ENCODE measurements at regions of chr16 and their contacts with region 1.

Region 1: GRCh38 chr16:25051406-25052150 is 36.4 kb upstream of the ARHGAP17 start:
- DNase-seq: no peak
- H3K4me3 ChIP-seq: no peak overlapping the region
- H3K27ac ChIP-seq: no peak overlapping the region
- H3K4me1 ChIP-seq: peaks cover 3% of the 10 kb centered on the region
- H3K27me3 ChIP-seq: no peaks in the 10 kb centered on the region
- CTCF ChIP-seq: no peak
- EP300 ChIP-seq: no peak
- POLR2A ChIP-seq: no peak

Region 2: DNA sequence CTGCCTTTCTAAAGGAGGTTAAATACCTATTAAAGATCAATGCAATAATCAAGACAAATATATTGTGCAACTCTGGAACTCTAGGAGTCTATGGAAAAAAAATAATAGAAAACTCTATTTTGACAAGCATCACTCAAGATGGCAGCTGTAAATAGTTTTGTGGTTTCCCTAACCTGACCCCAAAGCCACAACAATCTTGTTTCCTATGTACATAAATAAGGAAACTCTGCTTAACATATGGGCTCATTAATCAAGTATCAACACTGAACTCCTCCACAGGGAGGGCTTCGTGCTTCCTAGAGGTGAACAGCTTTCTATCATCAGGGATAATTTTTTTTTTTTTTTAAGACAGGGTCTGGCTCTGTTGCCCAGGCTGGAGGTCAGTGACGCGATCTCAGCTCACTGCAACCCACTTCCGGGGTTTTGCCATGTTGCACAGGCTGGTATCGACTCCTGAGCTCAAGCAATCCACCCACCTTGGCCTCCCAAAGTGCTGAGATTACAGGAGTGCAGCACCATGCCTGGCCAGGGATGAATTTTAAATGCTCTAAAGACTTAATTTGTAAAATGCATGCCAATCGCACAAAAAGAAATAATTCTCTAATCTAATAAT is 78.9 kb before region 1 on chr16:
- intact Hi-C with region 1: no loop called
- DNase-seq: no peak
- H3K4me3 ChIP-seq: no peak overlapping the region
- H3K27ac ChIP-seq: no peak overlapping the region
- H3K4me1 ChIP-seq: peaks cover 8% of the 10 kb centered on the region
- H3K27me3 ChIP-seq: no peaks in the 10 kb centered on the region
- CTCF ChIP-seq: no peak
- EP300 ChIP-seq: no peak
- POLR2A ChIP-seq: no peak

Region 3: DNA sequence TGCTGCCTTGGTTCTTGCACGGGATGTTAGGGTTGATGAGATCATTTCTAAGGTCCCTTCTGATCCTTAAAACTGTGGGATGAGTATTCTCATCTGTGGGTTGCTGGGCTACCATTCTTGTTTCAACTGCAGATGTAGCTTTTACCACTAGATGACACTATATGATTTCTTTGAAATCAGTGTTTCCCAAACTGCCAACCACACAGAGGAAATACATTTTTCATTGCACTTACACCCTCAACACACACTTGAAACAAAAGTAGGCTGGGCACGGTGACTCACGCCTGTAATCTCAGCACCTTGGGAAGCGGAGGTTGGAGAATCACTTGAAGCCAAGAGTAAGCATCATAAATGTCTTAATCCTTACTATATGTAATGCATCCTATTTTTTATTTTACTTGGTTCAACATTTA is 75.2 kb after region 1 on chr16:
- intact Hi-C with region 1: loop called in 1 of 4 experiments (anchors 2 kb)
- DNase-seq: no peak
- H3K4me3 ChIP-seq: no peak overlapping the region
- H3K27ac ChIP-seq: no peak overlapping the region
- H3K4me1 ChIP-seq: no peaks in the 10 kb centered on the region
- H3K27me3 ChIP-seq: no peaks in the 10 kb centered on the region
- CTCF ChIP-seq: no peak
- EP300 ChIP-seq: no peak
- POLR2A ChIP-seq: no peak

Measured in ovary (tissue), 10 donors.